Activated CD4-positive, alpha-beta T cell treated with anti-CD3 and anti-CD28 coated beads, Interleukin-2, amount 10 ng/mL, durations not matched to agents 24 days and 14 days (primary cell): ENCODE measurements at regions of chr6 and their contacts with region 1.

Region 1: GRCh38 chr6:37169496-37170272 is at the start of gene PIM1:
- DNase-seq: peak; percentile 98
- H3K4me3 Mint-ChIP-seq: peak within 1 kb of the TSS; percentile 98
- H3K27ac Mint-ChIP-seq: peak within 1 kb of the TSS; percentile 98
- H3K4me1 Mint-ChIP-seq: peaks cover 48% of the 10 kb centered on the region
- H3K27me3 Mint-ChIP-seq: no peaks in the 10 kb centered on the region
- total RNA-seq, gene PIM1: 153 and 158 TPM in 2 replicates

Region 2: DNA sequence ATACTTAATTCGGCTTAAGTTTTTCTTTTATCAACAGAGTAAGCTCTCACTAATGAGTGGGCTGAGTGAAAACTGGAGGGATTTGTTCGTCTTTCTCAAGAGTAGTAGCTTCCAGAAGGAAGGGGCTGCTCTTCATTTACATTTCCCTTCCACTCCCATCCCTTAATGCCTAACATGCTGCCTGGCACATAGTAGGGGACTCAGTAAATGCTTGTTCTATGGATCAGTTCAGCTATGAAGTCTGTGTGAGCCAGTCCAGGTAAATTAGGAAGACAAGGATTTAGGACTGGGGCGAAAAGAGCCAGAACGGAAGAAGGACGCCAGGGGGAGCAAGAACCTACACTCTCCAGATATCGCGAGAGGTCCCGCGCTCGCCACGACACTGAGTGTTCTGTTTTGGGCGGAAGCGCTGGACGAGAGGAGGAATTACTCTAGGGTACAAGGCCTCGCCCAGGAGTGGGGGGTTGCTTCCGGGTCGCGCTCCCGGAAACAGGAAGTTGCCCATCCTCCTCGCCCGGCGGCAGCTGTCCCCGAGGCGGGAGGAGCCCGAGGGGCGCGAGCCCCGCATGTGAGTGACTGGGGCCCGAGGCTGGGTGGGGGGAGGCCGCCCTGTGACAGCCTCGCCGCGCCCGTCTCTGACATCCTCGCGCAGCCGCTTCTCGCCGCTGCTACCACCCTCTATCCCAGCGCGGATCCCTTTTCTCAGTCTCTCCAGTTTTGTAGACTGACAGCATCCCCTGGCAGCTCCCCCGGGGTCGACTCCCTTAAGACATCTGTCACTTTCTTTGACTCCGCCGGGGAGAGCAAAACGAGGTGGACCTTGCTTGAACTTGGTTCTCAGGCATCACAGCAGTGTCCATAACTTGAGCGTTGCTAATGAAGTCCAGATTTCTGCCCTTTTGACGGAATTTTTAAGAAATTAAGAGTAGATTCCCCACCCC is 284.0 kb before region 1 on chr6 and contains the start of gene C6orf89:
- intact Hi-C with region 1: loop called (anchors 2 kb)
- DNase-seq: peak; percentile 99
- H3K4me3 Mint-ChIP-seq: peak within 1 kb of the TSS; percentile 89
- H3K27ac Mint-ChIP-seq: peak within 1 kb of the TSS; percentile 89
- H3K4me1 Mint-ChIP-seq: peaks cover 28% of the 10 kb centered on the region
- H3K27me3 Mint-ChIP-seq: no peaks in the 10 kb centered on the region
- total RNA-seq, gene C6orf89: 25.9 and 27.4 TPM in 2 replicates

Region 3: GRCh38 chr6:37018198-37019064 is 151.3 kb before region 1 on chr6:
- intact Hi-C with region 1: loop called (anchors 1 kb)
- DNase-seq: peak; percentile 97
- H3K4me3 Mint-ChIP-seq: peak overlapping the region; percentile 16
- H3K27ac Mint-ChIP-seq: peak overlapping the region; percentile 85
- H3K4me1 Mint-ChIP-seq: peaks cover 44% of the 10 kb centered on the region
- H3K27me3 Mint-ChIP-seq: no peaks in the 10 kb centered on the region

Region 4: DNA sequence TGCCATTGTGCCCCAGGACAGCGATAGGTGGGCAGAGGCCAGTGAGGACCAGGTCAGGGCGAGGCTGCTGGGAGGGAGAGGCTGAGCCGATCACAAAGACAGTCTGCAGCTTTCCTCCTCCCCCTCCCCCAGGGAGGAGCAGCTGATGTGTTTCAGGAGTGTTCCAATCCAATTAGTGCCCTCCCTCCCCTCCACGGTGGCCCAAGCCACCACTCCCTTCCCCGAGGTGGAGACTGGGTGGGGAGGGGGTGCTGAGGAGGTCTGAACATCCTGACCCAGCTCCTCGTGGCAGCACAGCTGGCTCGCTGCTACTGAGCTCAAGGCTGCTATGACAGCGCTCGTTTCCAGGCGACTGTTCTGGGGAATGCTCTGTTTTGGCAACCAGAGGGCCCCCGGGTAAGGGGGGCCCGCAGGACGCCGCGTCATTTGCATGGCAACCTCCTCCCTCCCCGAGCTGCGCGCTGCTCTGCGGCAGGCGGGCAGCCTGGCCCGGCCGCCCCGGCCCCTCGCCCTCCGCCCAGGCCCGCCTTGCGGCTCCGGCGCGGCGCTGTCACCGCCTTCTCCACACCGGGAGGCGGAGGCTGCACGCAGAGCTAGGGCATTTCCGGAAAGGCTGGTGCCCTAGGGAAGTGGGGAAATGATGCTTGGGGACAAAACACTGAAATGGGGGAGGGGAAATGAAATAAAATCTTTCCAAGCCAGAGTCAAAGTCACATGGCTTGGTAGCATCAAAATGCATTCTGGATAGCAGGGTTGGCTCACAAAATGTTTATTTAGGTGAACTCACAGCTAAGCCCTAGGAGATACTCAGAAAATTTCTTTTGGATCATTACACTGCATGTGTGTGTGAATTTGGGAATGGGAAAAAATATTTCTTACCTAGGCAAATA is 67.2 kb before region 1 on chr6:
- intact Hi-C with region 1: loop called (anchors 1 kb)
- DNase-seq: peak; percentile 93
- H3K4me3 Mint-ChIP-seq: peak overlapping the region; percentile 69
- H3K27ac Mint-ChIP-seq: peak overlapping the region; percentile 92
- H3K4me1 Mint-ChIP-seq: peaks cover 36% of the 10 kb centered on the region
- H3K27me3 Mint-ChIP-seq: no peaks in the 10 kb centered on the region

Region 5: GRCh38 chr6:37131104-37131959 is 38.4 kb before region 1 on chr6:
- intact Hi-C with region 1: no loop called
- DNase-seq: no peak
- H3K4me3 Mint-ChIP-seq: no peak overlapping the region
- H3K27ac Mint-ChIP-seq: no peak overlapping the region
- H3K4me1 Mint-ChIP-seq: peaks cover 11% of the 10 kb centered on the region
- H3K27me3 Mint-ChIP-seq: peaks cover 2% of the 10 kb centered on the region

Region 6: DNA sequence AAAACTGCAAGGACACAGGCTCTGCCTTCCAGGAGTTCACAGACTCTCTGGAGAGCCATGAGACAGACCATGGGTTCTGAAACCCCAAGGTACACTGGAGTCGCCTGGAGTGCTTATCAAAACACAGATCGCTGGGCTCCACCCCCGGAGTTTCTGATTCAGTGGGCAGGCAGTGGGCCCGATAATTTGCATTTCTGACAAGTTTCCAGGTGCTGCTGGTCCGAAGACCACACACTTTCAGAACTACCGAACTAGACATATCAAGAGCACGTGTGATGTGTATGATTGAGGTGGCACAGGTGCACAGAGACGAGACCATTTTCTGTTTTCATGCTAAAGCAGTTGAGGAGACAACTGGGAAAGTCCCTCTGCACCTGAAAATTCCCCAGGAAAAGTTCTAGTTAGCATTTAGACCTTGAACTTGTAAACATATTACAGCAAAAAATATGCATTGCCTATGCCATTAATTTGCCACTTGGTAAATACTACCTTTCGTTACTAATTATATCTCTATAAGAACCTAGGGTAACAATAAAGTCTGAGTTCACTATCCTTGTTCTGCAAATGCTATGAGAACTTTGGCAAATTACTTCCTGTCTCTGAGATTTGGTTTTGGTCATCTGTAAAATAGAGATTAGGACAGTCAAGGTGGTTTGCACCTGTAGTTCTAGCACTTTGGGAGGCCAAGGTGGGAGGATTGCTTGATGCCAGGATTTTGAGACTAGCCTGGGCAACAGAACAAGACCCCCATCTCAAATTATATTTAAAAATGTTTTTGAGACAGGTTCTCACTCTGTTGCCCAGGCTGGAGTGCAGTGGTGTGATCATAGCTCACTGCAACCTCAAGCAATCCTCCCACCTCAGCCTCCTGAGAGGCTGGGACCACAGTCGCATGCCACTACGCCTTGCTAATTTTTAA is 14.0 kb before region 1 on chr6:
- intact Hi-C with region 1: loop called (anchors 1 kb)
- DNase-seq: peak; percentile 84
- H3K4me3 Mint-ChIP-seq: peak overlapping the region; percentile 66
- H3K27ac Mint-ChIP-seq: peak overlapping the region; percentile 81
- H3K4me1 Mint-ChIP-seq: peaks cover 22% of the 10 kb centered on the region
- H3K27me3 Mint-ChIP-seq: peaks cover 1% of the 10 kb centered on the region

Region 7: DNA sequence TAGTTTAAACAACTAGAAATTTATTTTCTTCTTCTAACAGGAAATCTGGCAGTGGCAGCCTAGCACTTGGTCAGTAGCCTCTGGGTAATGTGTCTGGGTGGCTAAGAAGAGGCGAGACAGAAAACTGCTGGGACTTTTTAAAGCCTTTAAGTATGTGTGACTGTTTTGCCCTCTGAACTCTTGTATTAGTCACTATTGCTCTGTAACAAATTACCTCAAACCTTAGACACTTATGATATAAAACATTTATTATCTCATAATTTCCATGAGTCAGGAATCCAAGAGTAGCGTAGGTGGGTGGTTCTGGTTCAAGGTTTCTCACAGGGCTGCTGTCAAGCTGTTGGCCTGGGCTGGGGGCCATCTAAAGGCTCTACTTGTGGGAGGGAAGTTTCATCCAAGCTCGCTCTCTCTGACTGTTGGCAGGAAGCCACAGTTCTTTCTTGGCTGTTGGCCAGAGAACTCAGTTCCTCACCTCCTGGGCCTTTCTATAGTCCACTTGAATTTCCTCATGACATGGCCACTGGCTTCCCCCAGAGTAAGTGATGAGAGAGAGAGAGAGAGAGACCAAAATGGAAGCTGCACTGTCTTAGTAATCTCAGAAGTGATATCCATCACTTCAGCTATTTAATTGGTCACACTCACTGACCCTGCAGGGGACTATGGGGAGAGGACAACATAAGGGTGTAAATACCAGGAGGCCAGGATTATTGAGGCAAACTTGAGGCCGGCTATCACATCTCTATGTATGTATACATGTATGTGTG is 70.4 kb after region 1 on chr6:
- intact Hi-C with region 1: loop called (anchors 1 kb)
- DNase-seq: peak; percentile 82
- H3K4me3 Mint-ChIP-seq: peak overlapping the region; percentile 49
- H3K27ac Mint-ChIP-seq: peak overlapping the region; percentile 96
- H3K4me1 Mint-ChIP-seq: peaks cover 38% of the 10 kb centered on the region
- H3K27me3 Mint-ChIP-seq: no peaks in the 10 kb centered on the region

Region 8: GRCh38 chr6:37432916-37433656 is 263.4 kb after region 1 on chr6 and contains the start of gene CMTR1:
- intact Hi-C with region 1: loop called (anchors 5 kb)
- DNase-seq: peak; percentile 100
- H3K4me3 Mint-ChIP-seq: peak within 1 kb of the TSS; percentile 96
- H3K27ac Mint-ChIP-seq: peak within 1 kb of the TSS; percentile 99
- H3K4me1 Mint-ChIP-seq: peaks cover 34% of the 10 kb centered on the region
- H3K27me3 Mint-ChIP-seq: peaks cover 8% of the 10 kb centered on the region
- total RNA-seq, gene CMTR1: 56.4 and 57.1 TPM in 2 replicates

Region 9: GRCh38 chr6:37483917-37484785 is 314.5 kb after region 1 on chr6:
- intact Hi-C with region 1: no loop called
- DNase-seq: peak; percentile 92
- H3K4me3 Mint-ChIP-seq: no peak overlapping the region
- H3K27ac Mint-ChIP-seq: no peak overlapping the region
- H3K4me1 Mint-ChIP-seq: peaks cover 9% of the 10 kb centered on the region
- H3K27me3 Mint-ChIP-seq: no peaks in the 10 kb centered on the region